Right cardiac atrium (tissue), 5 donors: ENCODE measurements at regions of chr19 and their contacts with region 1.

Region 1: DNA sequence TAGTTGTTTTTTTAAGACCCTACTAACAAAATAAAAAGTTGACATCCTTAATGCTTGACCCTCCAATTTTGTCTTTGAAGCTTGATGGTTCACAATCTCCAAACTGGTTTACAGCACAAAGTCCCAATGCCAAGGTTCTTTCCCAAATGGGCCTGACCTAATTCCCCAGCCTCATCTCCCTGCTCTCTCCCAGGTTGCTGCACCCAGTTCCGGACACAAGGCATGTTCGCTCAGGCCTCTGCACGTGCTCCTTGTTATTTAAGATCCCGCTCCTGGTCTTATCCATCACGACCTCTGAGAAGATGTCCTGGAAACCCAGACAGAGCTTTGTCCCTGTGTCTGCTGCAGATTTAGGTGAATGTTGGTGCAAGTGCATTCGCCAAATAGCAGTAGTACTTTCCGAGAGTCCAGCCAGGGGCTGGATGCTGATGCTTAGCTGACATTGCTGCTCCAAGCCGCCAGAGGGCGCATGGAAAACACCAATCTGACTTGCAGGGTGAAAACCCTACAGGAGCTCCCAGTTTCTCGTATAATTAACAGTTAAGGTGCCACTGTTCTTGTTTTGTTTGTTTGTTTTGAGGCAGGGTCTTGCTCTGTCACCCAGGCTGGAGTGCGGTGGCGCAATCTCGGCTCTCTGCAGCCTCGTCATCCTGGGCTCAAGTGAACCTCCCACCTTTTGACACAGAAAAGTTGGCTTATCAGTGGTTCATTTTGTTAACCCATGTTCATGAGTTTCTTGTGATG is 18.5 kb downstream of the LYPD3 start:
- DNase-seq: peak; percentile 75 to 89 (median 87)
- ATAC-seq: peak; percentile 82 to 83
- H3K4me3 ChIP-seq: no peak overlapping the region
- H3K27ac ChIP-seq: no peak overlapping the region
- H3K4me1 ChIP-seq: no peaks in the 10 kb centered on the region
- H3K27me3 ChIP-seq: no peaks in the 10 kb centered on the region

Region 2: GRCh38 chr19:43331435-43332010 is 115.4 kb before region 1 on chr19:
- intact Hi-C with region 1: no loop called
- DNase-seq: no peak
- ATAC-seq: no peak
- H3K4me3 ChIP-seq: no peak overlapping the region
- H3K27ac ChIP-seq: no peak overlapping the region
- H3K4me1 ChIP-seq: no peaks in the 10 kb centered on the region
- H3K27me3 ChIP-seq: no peaks in the 10 kb centered on the region

Region 3: GRCh38 chr19:43519436-43520088 is 72.6 kb after region 1 on chr19:
- intact Hi-C with region 1: loop called (anchors 1 to 5 kb)
- DNase-seq: peak; percentile 72 to 87 (median 87)
- ATAC-seq: peak; percentile 59 to 65
- H3K4me3 ChIP-seq: no peak overlapping the region
- H3K27ac ChIP-seq: no peak overlapping the region
- H3K4me1 ChIP-seq: no peaks in the 10 kb centered on the region
- H3K27me3 ChIP-seq: no peaks in the 10 kb centered on the region

Region 4: GRCh38 chr19:43668406-43669158 is 221.7 kb after region 1 on chr19:
- intact Hi-C with region 1: loop called in 1 of 4 experiments (anchors 10 kb)
- DNase-seq: peak; percentile 99
- ATAC-seq: peak; percentile 93 to 96
- H3K4me3 ChIP-seq: peak overlapping the region; percentile 67
- H3K27ac ChIP-seq: peak overlapping the region; percentile 89
- H3K4me1 ChIP-seq: no peaks in the 10 kb centered on the region
- H3K27me3 ChIP-seq: no peaks in the 10 kb centered on the region